H1 (cell line): ENCODE measurements at regions of chr9 and their contacts with region 1.

Region 1: DNA sequence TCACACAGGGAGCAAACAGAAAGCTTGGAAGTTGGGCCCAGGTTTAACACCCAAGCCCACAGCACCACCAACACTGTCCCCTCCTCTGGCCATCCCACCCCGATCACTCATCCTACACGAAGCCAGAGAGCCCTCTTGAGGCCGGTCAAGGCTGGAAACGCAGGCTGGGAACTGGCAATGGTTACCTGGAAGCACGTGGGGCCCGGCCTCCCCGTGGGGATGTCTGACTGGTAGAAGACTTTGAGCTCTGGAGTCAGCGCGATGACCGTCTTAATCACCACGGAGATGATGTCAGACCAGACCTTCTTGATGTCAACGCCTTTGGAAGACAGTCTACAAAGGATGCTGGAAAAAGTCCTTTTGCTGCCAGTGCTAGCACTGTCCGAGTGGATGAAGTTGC is 104.1 kb downstream of the TTLL11 start:
- DNase-seq: peak; percentile 33 to 75
- H3K4me3 ChIP-seq: no peak overlapping the region
- H3K27ac ChIP-seq: no peak overlapping the region
- H3K4me1 ChIP-seq: no peaks in the 10 kb centered on the region
- H3K27me3 ChIP-seq: no peaks in the 10 kb centered on the region; a peak in 2 of 7 replicates
- CTCF ChIP-seq: peak; percentile 73 to 84 (median 80)
- EP300 ChIP-seq: no peak
- POLR2A ChIP-seq: no peak
- RAD21 ChIP-seq: peak; percentile 86 to 91

Region 2: DNA sequence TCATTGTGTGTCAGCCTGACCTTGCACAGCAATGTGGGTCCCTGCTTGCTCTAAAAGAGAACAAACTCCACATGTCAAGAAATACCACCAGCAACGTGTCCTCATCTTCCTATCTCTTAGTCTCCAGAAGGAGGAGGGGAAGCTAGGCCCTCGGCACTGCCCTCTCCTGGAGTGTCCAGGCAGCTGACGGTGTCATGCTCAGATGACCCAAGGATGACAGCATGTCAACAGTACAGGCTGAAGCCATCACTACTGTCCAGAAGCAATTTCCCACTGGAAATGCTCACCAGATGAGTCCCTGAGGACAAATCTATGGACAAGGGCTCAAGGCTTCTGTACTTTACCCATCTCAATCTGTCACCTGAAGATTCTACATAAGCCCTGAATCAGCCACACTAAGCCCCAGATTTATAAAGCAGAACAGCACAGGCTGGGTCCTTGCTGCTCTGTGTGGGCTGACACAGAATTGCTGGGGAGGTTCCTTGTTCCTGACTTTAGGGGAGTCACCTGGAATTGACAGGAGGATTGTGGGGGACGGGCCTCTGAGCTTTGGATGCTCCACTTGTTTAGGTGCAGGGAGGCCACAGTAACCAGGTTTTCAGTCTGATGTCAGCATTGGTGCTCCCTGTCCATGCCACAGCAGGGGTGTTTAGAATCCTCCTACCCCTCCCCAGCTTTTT is 127.4 kb before region 1 on chr9:
- CTCF ChIA-PET with region 1: interaction called, 20 read pairs
- POLR2A ChIA-PET with region 1: no interaction called
- DNase-seq: peak in 1 of 2 experiments; percentile 57
- H3K4me3 ChIP-seq: no peak overlapping the region
- H3K27ac ChIP-seq: no peak overlapping the region
- H3K4me1 ChIP-seq: peaks cover 0 to 8% (median 2%) of the 10 kb centered on the region in 4 experiments; a peak in 6 of 7 replicates
- H3K27me3 ChIP-seq: no peaks in the 10 kb centered on the region
- CTCF ChIP-seq: peak; percentile 81 to 91 (median 91)
- EP300 ChIP-seq: no peak
- POLR2A ChIP-seq: no peak
- RAD21 ChIP-seq: peak; percentile 64 to 77

Region 3: GRCh38 chr9:121902461-121903135 is 86.4 kb before region 1 on chr9:
- CTCF ChIA-PET with region 1: no interaction called
- POLR2A ChIA-PET with region 1: no interaction called
- DNase-seq: no peak
- H3K4me3 ChIP-seq: no peak overlapping the region
- H3K27ac ChIP-seq: no peak overlapping the region
- H3K4me1 ChIP-seq: no peaks in the 10 kb centered on the region
- H3K27me3 ChIP-seq: no peaks in the 10 kb centered on the region
- CTCF ChIP-seq: no peak
- EP300 ChIP-seq: no peak
- POLR2A ChIP-seq: no peak
- RAD21 ChIP-seq: no peak

Region 4: GRCh38 chr9:121935739-121936138 is 53.3 kb before region 1 on chr9:
- CTCF ChIA-PET with region 1: interaction called, 14 read pairs
- POLR2A ChIA-PET with region 1: no interaction called
- DNase-seq: peak in 1 of 2 experiments; percentile 60
- H3K4me3 ChIP-seq: no peak overlapping the region
- H3K27ac ChIP-seq: no peak overlapping the region
- H3K4me1 ChIP-seq: peaks cover 0 to 5% (median 1%) of the 10 kb centered on the region in 4 experiments; a peak in 2 of 7 replicates
- H3K27me3 ChIP-seq: no peaks in the 10 kb centered on the region; a peak in 2 of 7 replicates
- CTCF ChIP-seq: peak in 2 of 3 experiments; percentile 35 to 55; a peak in 3 of 4 replicates
- EP300 ChIP-seq: no peak
- POLR2A ChIP-seq: no peak
- RAD21 ChIP-seq: peak; percentile 53 to 59

Region 5: DNA sequence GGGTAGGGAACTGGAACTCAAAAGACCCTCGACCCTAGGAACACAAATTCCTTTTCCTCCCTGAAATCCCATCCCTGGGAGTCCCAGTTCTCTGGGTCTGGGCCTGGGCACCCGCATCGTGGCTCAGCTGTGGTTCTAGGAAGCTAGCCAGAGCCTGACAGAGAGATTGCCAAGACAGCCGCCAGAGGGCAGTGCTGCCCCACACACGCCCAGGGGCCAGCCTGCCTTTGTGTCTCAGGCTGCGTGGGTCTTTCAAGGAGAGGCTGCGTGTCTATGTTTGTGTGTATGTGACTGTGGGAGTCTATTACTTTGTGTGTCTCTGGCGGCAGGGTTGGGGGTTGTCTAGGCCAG is 136.1 kb after region 1 on chr9:
- CTCF ChIA-PET with region 1: no interaction called
- POLR2A ChIA-PET with region 1: no interaction called
- DNase-seq: peak in 1 of 2 experiments; percentile 92
- H3K4me3 ChIP-seq: 0 out of 8 replicates have a peak overlapping the region, but pooled peaks of 1 of the 4 experiments have one; percentile 67
- H3K27ac ChIP-seq: no peak overlapping the region
- H3K4me1 ChIP-seq: peaks cover 0 to 10% (median 3%) of the 10 kb centered on the region in 4 experiments; a peak in 6 of 7 replicates
- H3K27me3 ChIP-seq: peaks cover 9 to 26% (median 24%) of the 10 kb centered on the region in 4 experiments
- CTCF ChIP-seq: peak in 2 of 3 experiments; percentile 95 to 96; a peak in 3 of 4 replicates
- EP300 ChIP-seq: no peak
- POLR2A ChIP-seq: no peak
- RAD21 ChIP-seq: peak; percentile 99